ENCODE measurements at regions of chr3 and their contacts with region 1.

Region 1: DNA sequence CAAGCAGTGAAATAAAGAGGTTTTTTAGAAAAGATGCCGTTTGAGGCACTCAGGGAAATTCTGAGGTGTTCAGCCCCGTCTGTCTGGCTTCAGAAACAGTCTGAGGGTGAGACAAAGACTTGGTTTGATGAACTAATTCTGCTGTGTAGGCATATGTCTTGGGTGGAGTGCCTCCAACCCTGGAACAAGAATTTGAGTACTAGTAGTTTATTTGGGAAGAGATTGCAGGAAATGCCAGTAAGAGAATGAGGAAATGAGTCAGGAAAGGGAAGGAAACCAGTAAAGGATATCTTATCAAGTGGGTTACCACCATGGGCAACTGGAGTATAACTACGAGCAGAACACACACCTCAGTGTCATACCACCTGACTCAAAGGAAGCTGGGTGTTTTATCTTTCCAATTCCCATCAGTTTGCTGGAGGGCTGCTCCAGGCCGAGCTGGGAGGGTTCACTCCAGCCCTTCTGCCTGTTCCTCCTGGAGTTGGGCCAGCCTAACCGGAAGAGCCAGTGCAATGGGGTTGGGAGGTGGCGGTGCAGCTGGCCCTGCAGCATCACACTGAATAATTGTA is 75.3 kb downstream of the TGFBR2 start:
- DNase-seq: no peak
- H3K4me3 Mint-ChIP-seq: peak overlapping the region; percentile 66
- H3K27ac Mint-ChIP-seq: peak overlapping the region; percentile 68
- H3K4me1 Mint-ChIP-seq: peaks cover 79% of the 10 kb centered on the region
- H3K27me3 Mint-ChIP-seq: no peaks in the 10 kb centered on the region

Region 2: GRCh38 chr3:30667280-30667651 is 14.5 kb before region 1 on chr3:
- intact Hi-C with region 1: loop called (anchors 1 kb)
- DNase-seq: peak; percentile 87
- H3K4me3 Mint-ChIP-seq: peak overlapping the region; percentile 25
- H3K27ac Mint-ChIP-seq: peak overlapping the region; percentile 79
- H3K4me1 Mint-ChIP-seq: peaks cover 81% of the 10 kb centered on the region
- H3K27me3 Mint-ChIP-seq: no peaks in the 10 kb centered on the region